Activated B cell treated with CpG ODN at 0.5 μM for 24 hours (primary cell): ENCODE measurements at regions of chr1 and their contacts with region 1.

Region 1: DNA sequence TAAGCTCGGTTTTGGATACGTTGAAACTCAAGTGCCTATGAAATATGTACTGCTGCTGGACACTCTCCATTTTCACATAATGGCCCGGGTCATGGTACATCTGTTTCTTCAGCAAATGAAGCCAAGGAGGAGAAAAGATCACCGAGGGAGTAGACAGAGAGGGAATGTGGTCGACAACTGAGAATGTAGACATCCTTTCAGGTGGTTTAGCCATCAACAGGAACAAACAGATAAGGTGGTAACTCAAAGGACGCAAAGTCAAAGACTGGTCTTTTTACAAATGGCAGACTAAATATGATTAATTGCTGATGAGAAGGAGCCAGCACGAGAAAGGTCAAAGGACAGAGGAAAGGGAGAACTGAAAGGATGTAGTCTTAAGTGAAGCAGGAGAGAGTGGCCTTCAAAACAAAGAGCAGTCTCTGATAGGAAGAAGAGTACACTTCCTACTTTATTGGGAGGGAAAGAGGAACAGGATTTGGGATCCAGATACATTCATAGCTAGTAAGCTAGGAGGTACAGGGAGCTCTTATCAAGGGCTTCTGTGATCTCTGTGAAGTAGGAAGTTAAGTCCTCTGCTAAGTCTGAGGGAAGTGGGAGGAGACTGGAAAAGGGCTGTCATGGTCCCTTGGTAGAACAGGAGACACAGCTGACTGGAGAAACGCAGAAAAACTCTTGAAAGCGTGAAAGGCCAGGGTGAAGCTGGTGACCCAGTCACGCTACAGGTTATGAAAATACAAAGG is 28.3 kb downstream of the NUP133 start:
- DNase-seq: peak; percentile 25
- ATAC-seq: peak; percentile 85
- H3K4me3 Mint-ChIP-seq: peak overlapping the region; percentile 33
- H3K27ac Mint-ChIP-seq: peak overlapping the region; percentile 89
- H3K4me1 Mint-ChIP-seq: peaks cover 46% of the 10 kb centered on the region
- H3K27me3 Mint-ChIP-seq: no peaks in the 10 kb centered on the region
- CTCF ChIP-seq: no peak

Region 2: DNA sequence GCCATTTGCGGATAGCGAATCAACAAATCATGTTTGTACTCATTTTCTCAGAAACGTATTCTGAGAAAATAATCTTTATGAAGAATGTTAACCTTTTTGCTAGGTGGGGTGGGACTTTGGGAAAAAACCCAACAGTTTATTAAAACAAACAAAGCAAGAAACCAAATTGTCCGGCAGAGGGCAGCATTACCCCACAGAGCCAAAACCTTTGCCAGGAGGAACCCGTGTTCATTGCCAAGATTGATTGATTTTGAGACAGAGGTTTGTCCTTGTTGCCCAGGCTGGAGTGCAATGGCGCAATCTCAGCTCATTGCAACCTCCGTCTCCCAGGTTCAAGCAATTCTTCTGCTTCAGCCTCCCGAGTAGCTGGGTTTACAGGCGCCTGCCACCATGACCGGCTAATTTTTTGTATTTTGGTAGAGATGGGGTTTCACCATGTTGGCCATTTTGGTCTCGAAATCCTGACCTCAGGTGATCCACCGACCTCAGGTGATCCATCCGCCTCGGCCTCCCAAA is 815.4 kb before region 1 on chr1:
- CTCF ChIA-PET with region 1: interaction called, 9 read pairs
- POLR2A ChIA-PET with region 1: no interaction called
- intact Hi-C with region 1: loop called (anchors 1 kb)
- DNase-seq: peak; percentile 52
- ATAC-seq: peak; percentile 49
- H3K4me3 Mint-ChIP-seq: no peak overlapping the region
- H3K27ac Mint-ChIP-seq: no peak overlapping the region
- H3K4me1 Mint-ChIP-seq: no peaks in the 10 kb centered on the region
- H3K27me3 Mint-ChIP-seq: peaks cover 8% of the 10 kb centered on the region
- CTCF ChIP-seq: peak; percentile 77

Region 3: GRCh38 chr1:229270547-229271447 is 209.0 kb before region 1 on chr1 and contains the start of gene RAB4A:
- CTCF ChIA-PET with region 1: interaction called, 9 read pairs
- POLR2A ChIA-PET with region 1: interaction called, 29 read pairs
- intact Hi-C with region 1: loop called (anchors 1 kb)
- DNase-seq: peak; percentile 87
- ATAC-seq: peak; percentile 93
- H3K4me3 Mint-ChIP-seq: peak within 1 kb of the TSS; percentile 91
- H3K27ac Mint-ChIP-seq: peak within 1 kb of the TSS; percentile 87
- H3K4me1 Mint-ChIP-seq: peaks cover 34% of the 10 kb centered on the region
- H3K27me3 Mint-ChIP-seq: no peaks in the 10 kb centered on the region
- CTCF ChIP-seq: no peak
- total RNA-seq, gene RAB4A: 40.2 and 42.3 TPM in 2 replicates

Region 4: DNA sequence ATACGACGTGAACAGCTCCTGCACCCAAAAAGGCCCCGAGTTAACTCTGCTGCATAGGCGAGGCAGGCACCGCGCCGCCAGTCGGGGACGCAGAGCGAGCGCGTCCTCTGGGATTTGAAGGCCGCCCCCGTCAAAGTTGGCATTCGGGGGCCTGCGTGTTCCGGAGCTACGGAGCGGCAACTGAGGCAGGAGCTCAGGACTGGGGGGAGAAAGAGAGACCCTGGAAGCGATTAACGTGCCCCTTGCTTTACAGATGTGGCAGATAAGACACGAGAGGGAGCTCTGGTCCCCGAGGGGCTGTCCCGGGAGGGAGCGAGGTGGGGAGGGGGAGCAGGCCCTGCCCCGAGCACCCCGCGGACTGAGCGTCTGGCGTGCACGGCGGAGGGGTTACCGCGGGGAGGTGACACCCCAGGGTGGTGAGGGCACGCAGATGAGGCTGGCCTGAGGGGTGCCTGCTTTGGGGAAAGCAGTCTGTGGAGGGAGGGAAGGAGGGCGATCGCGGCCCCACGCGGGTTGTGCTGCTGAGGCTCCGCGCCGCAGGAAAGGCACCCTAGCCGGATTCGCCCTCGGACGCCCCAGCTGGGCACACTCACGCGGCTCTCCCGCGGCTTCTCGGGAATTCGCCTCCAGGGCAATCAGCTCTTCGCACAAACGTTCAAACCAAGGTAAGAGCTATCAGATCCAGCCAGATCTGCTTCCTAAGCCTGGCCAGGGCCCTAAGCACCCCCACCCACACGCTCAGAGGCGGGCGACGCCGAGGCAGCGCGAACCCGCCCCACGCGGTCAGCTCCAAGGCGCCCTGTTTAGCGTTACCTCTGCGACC is 72.4 kb before region 1 on chr1:
- CTCF ChIA-PET with region 1: interaction called, 10 read pairs
- POLR2A ChIA-PET with region 1: interaction called, 5 read pairs
- intact Hi-C with region 1: loop called (anchors 1 kb)
- DNase-seq: peak; percentile 23
- ATAC-seq: peak; percentile 37
- H3K4me3 Mint-ChIP-seq: peak overlapping the region; percentile 78
- H3K27ac Mint-ChIP-seq: no peak overlapping the region
- H3K4me1 Mint-ChIP-seq: peaks cover 11% of the 10 kb centered on the region
- H3K27me3 Mint-ChIP-seq: peaks cover 61% of the 10 kb centered on the region
- CTCF ChIP-seq: no peak

Region 5: DNA sequence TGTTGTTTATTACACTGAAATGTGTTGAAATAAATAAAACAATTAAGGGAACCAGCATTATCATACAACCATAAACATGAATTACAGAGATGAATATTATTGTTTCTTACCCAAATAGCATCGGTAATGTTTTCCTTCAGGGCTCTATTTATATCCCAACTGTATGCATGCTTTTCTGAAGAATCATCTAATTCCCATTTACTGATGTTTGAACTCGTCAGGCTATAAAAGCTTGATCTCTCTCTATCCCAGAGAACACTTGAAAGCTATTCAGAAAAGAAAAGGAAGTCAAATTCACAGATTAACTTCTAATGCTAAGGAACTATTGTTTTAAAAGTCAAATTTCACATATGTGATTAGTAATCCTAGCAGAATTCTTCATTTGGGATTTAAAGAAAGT is 16.0 kb after region 1 on chr1:
- CTCF ChIA-PET with region 1: interaction called, 15 read pairs
- POLR2A ChIA-PET with region 1: no interaction called
- intact Hi-C with region 1: no loop called
- DNase-seq: no peak
- ATAC-seq: no peak
- H3K4me3 Mint-ChIP-seq: no peak overlapping the region
- H3K27ac Mint-ChIP-seq: no peak overlapping the region
- H3K4me1 Mint-ChIP-seq: no peaks in the 10 kb centered on the region
- H3K27me3 Mint-ChIP-seq: no peaks in the 10 kb centered on the region
- CTCF ChIP-seq: no peak

Region 6: DNA sequence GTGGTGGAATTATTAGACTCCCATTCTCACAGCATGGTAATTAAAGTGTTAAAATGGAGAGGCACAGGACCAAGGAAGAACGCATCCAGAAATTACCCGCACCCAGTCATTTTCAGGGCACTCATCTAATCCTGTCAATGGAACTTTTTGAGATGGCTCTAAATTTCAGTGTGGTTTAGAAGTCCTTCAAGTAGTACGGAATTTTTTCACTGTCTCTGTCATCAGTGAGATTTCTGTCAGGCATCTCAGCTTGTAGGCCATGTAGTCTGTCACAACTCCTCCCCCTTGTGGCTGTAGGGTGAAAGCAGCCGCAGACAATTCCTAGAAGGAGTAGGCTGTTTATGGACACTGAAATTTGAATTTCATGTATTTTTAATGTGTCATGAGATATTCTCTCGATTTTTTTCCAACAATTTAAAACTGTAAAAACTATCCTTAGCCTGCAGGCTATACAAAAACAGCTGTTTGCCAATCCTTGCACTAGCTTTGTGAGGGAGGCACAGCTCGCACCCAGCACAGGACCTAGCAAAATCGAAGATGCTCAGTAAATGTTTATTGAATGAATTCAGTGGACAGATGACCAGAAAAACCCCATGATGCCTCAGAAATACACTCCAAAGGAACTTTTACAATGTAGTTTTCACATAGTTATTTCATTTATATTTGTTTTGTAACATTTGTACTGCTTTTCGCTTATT is 34.9 kb after region 1 on chr1:
- CTCF ChIA-PET with region 1: interaction called, 11 read pairs
- POLR2A ChIA-PET with region 1: interaction called, 47 read pairs
- intact Hi-C with region 1: loop called (anchors 2 kb)
- DNase-seq: peak; percentile 19
- ATAC-seq: peak; percentile 97
- H3K4me3 Mint-ChIP-seq: no peak overlapping the region
- H3K27ac Mint-ChIP-seq: no peak overlapping the region
- H3K4me1 Mint-ChIP-seq: peaks cover 4% of the 10 kb centered on the region
- H3K27me3 Mint-ChIP-seq: no peaks in the 10 kb centered on the region
- CTCF ChIP-seq: peak; percentile 15